Esophagus muscularis mucosa (tissue), 4 donors: ENCODE measurements at regions of chr5 and their contacts with region 1.

Region 1: GRCh38 chr5:69166686-69167492 is at the start of gene CCNB1:
- DNase-seq: peak; percentile 99
- H3K4me3 ChIP-seq: peak within 1 kb of the TSS; percentile 69 to 79 (median 72)
- H3K27ac ChIP-seq: peak within 1 kb of the TSS; percentile 35 to 66 (median 51)
- H3K4me1 ChIP-seq: peaks cover 9 to 18% (median 15%) of the 10 kb centered on the region in 4 donors
- H3K27me3 ChIP-seq: no peaks in the 10 kb centered on the region
- CTCF ChIP-seq: peak in 1 of 3 experiments; percentile 18
- EP300 ChIP-seq: no peak
- POLR2A ChIP-seq: no peak
- total RNA-seq, gene CCNB1: 0.83 to 2.8 (median 2.2) TPM

Region 2: DNA sequence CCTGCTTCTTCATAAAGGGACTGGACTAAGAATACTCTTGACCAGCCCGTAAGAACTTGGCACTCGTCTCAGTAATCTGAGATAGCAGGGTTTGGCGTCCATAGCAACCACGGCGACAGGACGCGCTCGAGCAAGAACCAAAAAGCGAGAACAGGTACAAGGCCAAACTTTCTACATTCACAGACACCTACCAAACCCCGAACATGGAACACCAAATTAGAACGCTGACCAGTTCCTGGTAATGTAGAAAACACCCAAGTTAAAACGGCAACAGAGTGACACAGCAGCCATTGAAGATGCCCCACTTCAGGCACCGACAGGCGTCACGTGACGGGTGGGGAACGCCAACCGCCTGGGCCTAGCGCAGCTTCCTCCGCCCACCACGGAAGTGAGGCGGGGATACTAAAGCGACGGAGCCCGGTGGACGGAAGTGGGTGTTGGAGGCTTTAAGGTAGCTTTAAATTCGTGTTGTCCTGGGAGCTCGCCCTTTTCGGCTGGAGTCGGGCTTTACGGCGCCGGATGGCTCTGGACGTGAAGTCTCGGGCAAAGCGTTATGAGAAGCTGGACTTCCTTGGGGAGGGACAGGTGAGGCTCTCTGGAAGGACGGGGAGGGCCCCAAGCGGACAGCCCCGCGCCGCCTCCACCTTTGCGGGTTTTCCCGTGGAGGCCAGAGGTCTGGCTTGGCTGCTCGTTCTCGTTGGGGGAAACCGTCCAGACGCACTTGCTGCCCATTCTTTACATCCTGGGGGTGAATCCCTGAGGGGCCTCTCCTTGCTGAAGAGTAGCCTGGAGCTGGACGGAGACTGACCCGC is 67.8 kb after region 1 on chr5 and contains the start of gene CDK7:
- intact Hi-C with region 1: loop called (anchors 5 kb)
- DNase-seq: peak; percentile 98
- H3K4me3 ChIP-seq: peak within 1 kb of the TSS; percentile 70 to 96 (median 76)
- H3K27ac ChIP-seq: peak within 1 kb of the TSS; percentile 77 to 88 (median 84)
- H3K4me1 ChIP-seq: peaks cover 15 to 48% (median 41%) of the 10 kb centered on the region in 4 donors
- H3K27me3 ChIP-seq: no peaks in the 10 kb centered on the region
- CTCF ChIP-seq: peak in 1 of 3 experiments; percentile 12
- EP300 ChIP-seq: no peak
- POLR2A ChIP-seq: no peak
- total RNA-seq, gene CDK7: 16.1 to 27.4 (median 23.5) TPM